ENCODE measurements at regions of chr11 and their contacts with region 1.

Region 1: DNA sequence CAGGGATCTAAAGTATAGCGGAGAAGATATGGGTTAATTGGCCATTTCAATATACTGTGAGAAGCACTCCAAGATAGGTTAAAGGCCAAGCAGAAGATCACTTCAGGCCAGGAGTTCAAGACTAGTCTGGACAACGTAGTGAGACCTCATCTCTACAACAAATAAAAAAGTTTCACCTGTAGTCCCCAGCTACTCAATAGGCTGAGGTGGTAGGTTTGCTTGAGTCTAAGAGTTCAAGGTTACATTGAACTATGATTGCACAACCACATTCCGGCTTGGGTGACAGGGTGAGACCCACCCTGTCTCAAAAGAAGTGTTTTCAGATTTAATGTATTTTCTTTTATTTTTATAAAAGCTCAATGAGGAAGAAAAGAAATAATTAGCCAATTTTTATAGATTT is 25.4 kb downstream of the PATL1 start:
- DNase-seq: no peak
- ATAC-seq: no peak
- H3K4me3 ChIP-seq: no peak overlapping the region
- H3K27ac ChIP-seq: no peak overlapping the region
- H3K4me1 ChIP-seq: peaks cover 12% of the 10 kb centered on the region
- H3K27me3 ChIP-seq: no peaks in the 10 kb centered on the region
- CTCF ChIP-seq: no peak

Region 2: DNA sequence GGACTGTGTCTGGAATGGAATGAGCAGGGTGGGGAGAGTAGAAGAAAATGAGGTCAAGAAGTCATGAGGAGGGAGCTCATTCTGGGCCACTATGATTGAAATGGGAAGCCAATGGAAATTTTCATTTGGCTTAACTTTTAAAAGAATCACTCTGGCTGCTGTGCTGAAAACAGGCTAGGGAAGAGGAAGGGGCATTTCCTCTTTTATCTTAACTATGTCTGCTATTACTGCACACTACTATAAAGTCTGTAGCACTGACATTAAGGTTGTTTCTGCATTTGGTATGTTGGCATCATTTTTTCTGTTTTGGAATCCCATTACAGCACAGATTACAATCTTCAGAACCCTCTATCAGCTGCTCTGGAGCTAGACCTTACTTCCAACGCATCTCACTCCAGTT is 17.2 kb after region 1 on chr11:
- CTCF ChIA-PET with region 1: no interaction called
- POLR2A ChIA-PET with region 1: no interaction called
- intact Hi-C with region 1: loop called (anchors 2 kb)
- DNase-seq: no peak
- ATAC-seq: no peak
- H3K4me3 ChIP-seq: no peak overlapping the region
- H3K27ac ChIP-seq: no peak overlapping the region
- H3K4me1 ChIP-seq: no peaks in the 10 kb centered on the region
- H3K27me3 ChIP-seq: no peaks in the 10 kb centered on the region
- CTCF ChIP-seq: no peak

Region 3: DNA sequence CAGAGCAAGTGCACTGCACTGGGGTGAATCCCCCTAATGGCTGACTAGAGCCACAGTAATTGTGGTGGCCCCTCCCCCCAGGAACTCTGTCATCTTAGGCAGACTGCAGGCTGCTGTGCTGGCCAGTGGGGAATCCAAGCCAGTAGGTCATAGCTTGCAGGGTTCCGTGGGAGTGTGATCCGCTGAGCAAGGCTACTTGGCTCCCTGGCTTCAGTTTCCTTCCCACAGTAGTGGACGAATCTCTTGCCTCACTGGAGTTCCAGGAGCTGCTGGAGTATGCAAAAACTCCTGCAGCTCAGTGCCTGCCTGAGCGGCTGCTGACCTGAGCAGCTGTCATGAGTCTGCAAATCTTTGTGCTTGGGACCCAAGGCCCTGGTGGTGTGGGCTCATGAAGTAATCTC is 248.4 kb after region 1 on chr11:
- CTCF ChIA-PET with region 1: no interaction called
- POLR2A ChIA-PET with region 1: no interaction called
- intact Hi-C with region 1: no loop called
- DNase-seq: no peak
- ATAC-seq: no peak
- H3K4me3 ChIP-seq: no peak overlapping the region
- H3K27ac ChIP-seq: no peak overlapping the region
- H3K4me1 ChIP-seq: 0 out of 2 replicates have a peak, but pooled peaks cover 6% of the 10 kb centered on the region
- H3K27me3 ChIP-seq: no peaks in the 10 kb centered on the region
- CTCF ChIP-seq: no peak